ENCODE measurements at regions of chr19 and their contacts with region 1.

Region 1: DNA sequence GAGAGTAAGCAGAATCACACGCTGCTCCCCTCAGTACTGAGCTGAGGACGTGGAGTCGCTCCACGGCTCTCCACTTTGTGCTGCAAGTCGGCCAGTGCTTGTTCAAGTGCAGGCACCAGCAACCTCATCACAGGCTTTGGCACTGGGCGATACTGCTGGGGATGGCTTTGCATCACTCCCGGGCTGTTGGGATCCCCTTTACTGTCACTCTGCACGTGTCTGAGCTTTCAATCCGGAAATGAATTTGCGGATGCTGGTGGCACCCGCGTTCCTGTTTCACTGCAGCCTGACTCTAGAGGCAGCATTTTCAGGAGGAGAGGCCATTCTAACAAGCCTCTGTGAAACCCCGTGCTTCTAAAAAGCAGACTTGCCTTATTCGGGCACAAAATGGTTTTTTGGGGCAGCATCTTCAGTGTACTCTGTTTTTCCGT is 19.1 kb downstream of the SMARCA4 start:
- DNase-seq: no peak
- H3K4me3 ChIP-seq: peak overlapping the region in 2 of 4 donors; percentile 6 to 12
- H3K27ac ChIP-seq: peak overlapping the region in 3 of 4 donors; percentile 6 to 55 (median 33)
- H3K4me1 ChIP-seq: peaks cover 26 to 57% (median 41%) of the 10 kb centered on the region in 4 donors
- H3K27me3 ChIP-seq: no peaks in the 10 kb centered on the region
- CTCF ChIP-seq: peak in 1 of 3 experiments; percentile 15
- EP300 ChIP-seq: no peak
- POLR2A ChIP-seq: no peak

Region 2: GRCh38 chr19:10936661-10937084 is 43.3 kb before region 1 on chr19:
- intact Hi-C with region 1: loop called (anchors 5 kb)
- DNase-seq: no peak
- H3K4me3 ChIP-seq: peak overlapping the region in 2 of 4 donors; percentile 13 to 14
- H3K27ac ChIP-seq: peak overlapping the region in 1 of 4 donors; percentile 26
- H3K4me1 ChIP-seq: peaks cover 0 to 12% (median 10%) of the 10 kb centered on the region in 4 donors
- H3K27me3 ChIP-seq: no peaks in the 10 kb centered on the region
- CTCF ChIP-seq: peak; percentile 54 to 66 (median 66)
- EP300 ChIP-seq: no peak
- POLR2A ChIP-seq: no peak

Region 3: GRCh38 chr19:11064831-11065303 is 84.9 kb after region 1 on chr19:
- intact Hi-C with region 1: no loop called
- DNase-seq: no peak
- H3K4me3 ChIP-seq: no peak overlapping the region
- H3K27ac ChIP-seq: peak overlapping the region; percentile 36 to 63 (median 46)
- H3K4me1 ChIP-seq: peaks cover 0 to 31% (median 24%) of the 10 kb centered on the region in 4 donors
- H3K27me3 ChIP-seq: no peaks in the 10 kb centered on the region
- CTCF ChIP-seq: no peak
- EP300 ChIP-seq: no peak
- POLR2A ChIP-seq: no peak

Measured in esophagus muscularis mucosa (tissue), 4 donors.